Caco-2 (cell line): ENCODE measurements at regions of chr10 and their contacts with region 1.

Region 1: DNA sequence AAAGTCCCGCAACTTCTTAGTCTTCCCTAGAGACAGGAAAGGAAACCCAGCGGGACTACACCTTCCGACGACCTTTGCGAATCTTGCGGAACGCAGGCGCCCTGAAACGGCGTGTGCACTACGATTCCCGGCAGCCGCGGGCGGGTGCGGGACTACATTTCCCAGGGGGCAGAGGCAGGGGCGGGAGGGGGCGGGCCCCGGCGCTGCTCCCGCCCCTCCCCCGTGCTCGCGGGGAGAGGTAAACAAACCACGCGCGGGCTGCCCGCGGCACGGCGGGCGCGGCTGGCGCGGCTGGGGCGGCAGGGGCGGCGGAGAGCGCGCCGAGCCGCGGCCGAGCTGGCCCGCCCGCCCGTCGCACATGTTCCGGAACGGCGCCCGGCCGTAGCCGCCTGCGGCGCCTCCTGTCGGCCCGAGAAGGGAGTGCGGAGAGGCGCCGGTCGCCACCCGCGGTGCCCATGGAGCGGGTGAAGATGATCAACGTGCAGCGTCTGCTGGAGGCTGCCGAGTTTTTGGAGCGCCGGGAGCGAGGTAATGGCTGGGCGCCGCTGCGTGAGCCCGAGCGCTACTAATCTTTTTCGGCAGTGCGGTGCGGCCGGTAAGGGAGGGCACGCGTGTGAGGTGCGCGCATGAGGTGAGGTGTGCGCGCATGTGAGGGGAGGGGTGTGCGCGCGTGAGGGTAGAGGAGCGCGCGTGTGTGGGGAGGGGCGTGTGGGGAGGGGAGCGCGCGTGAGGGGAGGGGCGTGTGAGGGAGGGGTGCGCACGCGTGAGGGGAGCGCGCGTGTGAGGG is 18.5 kb downstream of the MXI1 start:
- DNase-seq: peak; percentile 93 to 95
- H3K4me3 ChIP-seq: peak overlapping the region; percentile 98
- H3K4me3 Mint-ChIP-seq: peak overlapping the region; percentile 86
- H3K27ac Mint-ChIP-seq: peak overlapping the region; percentile 62
- H3K4me1 ChIP-seq: peaks cover 9% of the 10 kb centered on the region
- H3K4me1 Mint-ChIP-seq: peaks cover 28% of the 10 kb centered on the region
- H3K27me3 ChIP-seq: no peaks in the 10 kb centered on the region
- H3K27me3 Mint-ChIP-seq: no peaks in the 10 kb centered on the region
- CTCF ChIP-seq: peak; percentile 60 to 81

Region 2: GRCh38 chr10:110007701-110008517 is 218.0 kb before region 1 on chr10 and contains the start of gene ADD3:
- CTCF ChIA-PET with region 1: no interaction called
- POLR2A ChIA-PET with region 1: no interaction called
- intact Hi-C with region 1: loop called (anchors 2 kb)
- DNase-seq: peak; percentile 96 to 97
- H3K4me3 ChIP-seq: peak within 1 kb of the TSS; percentile 94
- H3K4me3 Mint-ChIP-seq: no peak within 1 kb of the TSS
- H3K27ac Mint-ChIP-seq: no peak within 1 kb of the TSS
- H3K4me1 ChIP-seq: peaks cover 47% of the 10 kb centered on the region
- H3K4me1 Mint-ChIP-seq: peaks cover 11% of the 10 kb centered on the region
- H3K27me3 ChIP-seq: no peaks in the 10 kb centered on the region
- H3K27me3 Mint-ChIP-seq: no peaks in the 10 kb centered on the region
- CTCF ChIP-seq: no peak
- total RNA-seq, gene ADD3: 236 and 264 TPM in 2 replicates

Region 3: DNA sequence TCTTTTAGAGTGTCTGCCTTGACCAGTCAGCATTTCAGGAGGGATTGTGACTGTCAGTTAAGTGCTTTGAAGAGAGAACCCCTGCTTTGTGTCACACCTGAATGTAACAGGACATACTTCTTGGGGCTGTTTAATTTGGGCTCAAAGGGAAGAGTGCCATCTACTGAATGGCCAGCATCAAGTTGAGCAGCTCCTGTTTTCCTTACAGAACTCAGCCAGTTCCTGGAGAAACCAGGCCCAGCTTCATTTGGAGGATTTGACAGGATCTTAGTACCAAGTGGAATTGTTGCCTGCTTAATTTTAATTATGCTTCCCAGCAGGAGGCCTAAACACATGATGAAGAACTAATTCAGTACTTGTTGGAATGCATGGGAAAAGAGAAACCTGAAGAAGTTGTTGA is 209.9 kb before region 1 on chr10:
- CTCF ChIA-PET with region 1: interaction called, 16 read pairs
- POLR2A ChIA-PET with region 1: no interaction called
- intact Hi-C with region 1: no loop called
- DNase-seq: peak in 1 of 2 experiments; percentile 41
- H3K4me3 ChIP-seq: no peak overlapping the region
- H3K4me3 Mint-ChIP-seq: no peak overlapping the region
- H3K27ac Mint-ChIP-seq: no peak overlapping the region
- H3K4me1 ChIP-seq: peaks cover 30% of the 10 kb centered on the region
- H3K4me1 Mint-ChIP-seq: peaks cover 32% of the 10 kb centered on the region
- H3K27me3 ChIP-seq: no peaks in the 10 kb centered on the region
- H3K27me3 Mint-ChIP-seq: no peaks in the 10 kb centered on the region
- CTCF ChIP-seq: peak in 1 of 2 experiments; percentile 51

Region 4: DNA sequence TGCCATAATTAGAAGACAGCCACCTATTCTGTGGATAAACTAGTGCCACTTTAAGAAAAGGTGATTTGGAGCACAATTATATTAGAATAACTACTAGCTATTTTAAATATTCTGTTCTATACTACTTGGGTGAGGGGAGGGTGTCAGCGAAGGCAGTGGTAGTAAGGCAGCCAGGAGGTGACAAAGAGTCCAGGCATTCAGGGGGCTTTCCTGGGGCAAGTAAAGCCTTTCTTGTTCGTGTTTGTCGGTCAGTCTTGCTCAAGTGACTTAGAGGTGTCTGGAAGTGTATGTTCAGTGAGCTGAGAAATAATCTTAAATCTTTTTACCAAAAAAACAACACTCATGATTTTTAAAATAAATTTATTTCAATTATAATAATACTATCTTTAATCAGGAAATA is 183.8 kb before region 1 on chr10:
- CTCF ChIA-PET with region 1: no interaction called
- POLR2A ChIA-PET with region 1: no interaction called
- intact Hi-C with region 1: no loop called
- DNase-seq: no peak
- H3K4me3 ChIP-seq: no peak overlapping the region
- H3K4me3 Mint-ChIP-seq: no peak overlapping the region
- H3K27ac Mint-ChIP-seq: no peak overlapping the region
- H3K4me1 ChIP-seq: peaks cover 17% of the 10 kb centered on the region
- H3K4me1 Mint-ChIP-seq: peaks cover 29% of the 10 kb centered on the region
- H3K27me3 ChIP-seq: no peaks in the 10 kb centered on the region
- H3K27me3 Mint-ChIP-seq: no peaks in the 10 kb centered on the region
- CTCF ChIP-seq: no peak

Region 5: DNA sequence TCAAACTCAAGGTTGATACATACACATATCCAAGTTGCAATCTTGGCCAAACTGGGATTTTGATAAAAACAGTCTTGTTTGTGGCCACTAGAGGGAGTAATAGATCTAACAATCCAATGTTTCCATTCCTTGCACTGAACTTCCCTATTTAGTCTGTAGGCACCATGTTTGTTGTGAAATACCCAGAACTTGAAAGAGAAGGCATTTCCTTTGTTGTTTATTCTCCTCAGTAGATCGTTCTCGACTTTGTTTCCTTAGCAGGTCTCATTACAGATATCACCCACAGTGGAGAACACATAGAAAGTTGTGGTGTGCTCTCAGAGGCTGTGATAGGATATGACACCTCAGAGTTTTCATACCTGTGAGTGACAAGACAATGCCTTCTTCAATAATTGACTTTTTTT is 88.8 kb before region 1 on chr10:
- CTCF ChIA-PET with region 1: interaction called, 14 read pairs
- POLR2A ChIA-PET with region 1: no interaction called
- intact Hi-C with region 1: loop called (anchors 1 kb)
- DNase-seq: peak in 1 of 2 experiments; percentile 64
- H3K4me3 ChIP-seq: no peak overlapping the region
- H3K4me3 Mint-ChIP-seq: no peak overlapping the region
- H3K27ac Mint-ChIP-seq: no peak overlapping the region
- H3K4me1 ChIP-seq: no peaks in the 10 kb centered on the region
- H3K4me1 Mint-ChIP-seq: peaks cover 9% of the 10 kb centered on the region
- H3K27me3 ChIP-seq: no peaks in the 10 kb centered on the region
- H3K27me3 Mint-ChIP-seq: no peaks in the 10 kb centered on the region
- CTCF ChIP-seq: peak; percentile 67 to 72

Region 6: DNA sequence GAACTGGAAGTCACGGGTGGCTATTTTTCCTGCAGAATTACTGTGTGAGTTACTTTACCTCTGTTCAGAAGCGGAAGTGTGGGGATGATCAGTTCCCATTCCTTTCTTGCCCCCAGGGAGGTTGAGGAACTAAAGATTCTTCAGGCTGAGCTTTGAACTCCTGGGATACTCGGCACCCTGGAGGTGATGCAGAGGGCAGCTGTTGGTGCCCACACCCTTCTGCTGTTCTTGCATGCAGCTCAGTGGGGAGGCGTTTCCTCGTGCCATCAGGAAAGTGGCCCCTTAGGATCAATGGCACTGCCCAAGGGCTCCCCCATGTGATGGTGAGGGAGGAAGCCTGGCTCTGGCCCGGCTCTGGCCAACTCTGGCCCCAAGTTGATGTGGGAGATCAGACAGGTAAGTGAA is 63.2 kb before region 1 on chr10:
- CTCF ChIA-PET with region 1: interaction called, 5 read pairs
- POLR2A ChIA-PET with region 1: no interaction called
- intact Hi-C with region 1: loop called (anchors 1 kb)
- DNase-seq: peak in 1 of 2 experiments; percentile 34
- H3K4me3 ChIP-seq: no peak overlapping the region
- H3K4me3 Mint-ChIP-seq: peak overlapping the region; percentile 55
- H3K27ac Mint-ChIP-seq: peak overlapping the region; percentile 79
- H3K4me1 ChIP-seq: peaks cover 39% of the 10 kb centered on the region
- H3K4me1 Mint-ChIP-seq: peaks cover 31% of the 10 kb centered on the region
- H3K27me3 ChIP-seq: no peaks in the 10 kb centered on the region
- H3K27me3 Mint-ChIP-seq: no peaks in the 10 kb centered on the region
- CTCF ChIP-seq: no peak

Region 7: DNA sequence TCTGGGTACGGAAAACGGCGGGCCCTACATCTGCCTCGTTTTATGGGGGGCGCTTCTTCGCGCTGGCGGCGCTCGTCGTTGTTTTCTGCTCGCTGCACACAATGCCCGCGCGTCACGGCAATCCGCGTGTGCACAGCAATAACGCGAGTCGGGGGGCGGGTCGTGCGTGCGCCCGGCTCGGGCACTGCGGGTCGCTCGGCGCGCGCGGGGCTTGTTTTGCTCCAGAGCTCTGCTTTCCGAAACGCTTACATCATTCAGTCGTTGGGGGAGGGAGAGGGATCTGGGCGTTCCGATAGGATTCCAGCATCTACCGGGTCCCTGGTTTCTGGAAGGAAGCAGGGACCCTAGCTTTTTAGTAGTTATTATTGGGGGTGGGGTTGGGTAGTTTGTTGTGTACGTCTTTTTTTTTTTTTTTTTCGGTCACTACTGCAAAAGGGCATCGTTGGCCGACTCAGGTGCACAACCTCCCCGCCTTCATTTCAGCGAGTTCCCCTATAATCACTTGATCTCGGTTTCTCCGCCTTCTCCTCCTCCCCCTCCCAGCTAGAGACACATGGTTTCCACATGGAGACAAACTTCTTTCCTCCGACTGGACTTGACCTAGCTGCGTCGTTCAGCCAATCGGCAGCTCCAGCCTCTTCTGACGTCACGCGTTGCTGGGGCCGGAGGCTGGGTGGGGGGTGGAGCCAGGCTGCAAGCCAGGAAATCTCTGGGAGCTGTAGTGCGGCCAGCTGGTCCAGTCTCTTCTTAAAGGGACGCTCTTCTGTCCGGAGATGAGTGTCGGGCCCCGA is 15.1 kb before region 1 on chr10:
- CTCF ChIA-PET with region 1: interaction called, 12 read pairs
- POLR2A ChIA-PET with region 1: interaction called, 3 read pairs
- intact Hi-C with region 1: loop called (anchors 1 kb)
- DNase-seq: peak; percentile 96 to 97
- H3K4me3 ChIP-seq: peak overlapping the region; percentile 79
- H3K4me3 Mint-ChIP-seq: peak overlapping the region; percentile 81
- H3K27ac Mint-ChIP-seq: peak overlapping the region; percentile 74
- H3K4me1 ChIP-seq: peaks cover 6% of the 10 kb centered on the region; the same call in 1 of the 2 replicates
- H3K4me1 Mint-ChIP-seq: peaks cover 28% of the 10 kb centered on the region
- H3K27me3 ChIP-seq: no peaks in the 10 kb centered on the region
- H3K27me3 Mint-ChIP-seq: no peaks in the 10 kb centered on the region
- CTCF ChIP-seq: no peak

Region 8: DNA sequence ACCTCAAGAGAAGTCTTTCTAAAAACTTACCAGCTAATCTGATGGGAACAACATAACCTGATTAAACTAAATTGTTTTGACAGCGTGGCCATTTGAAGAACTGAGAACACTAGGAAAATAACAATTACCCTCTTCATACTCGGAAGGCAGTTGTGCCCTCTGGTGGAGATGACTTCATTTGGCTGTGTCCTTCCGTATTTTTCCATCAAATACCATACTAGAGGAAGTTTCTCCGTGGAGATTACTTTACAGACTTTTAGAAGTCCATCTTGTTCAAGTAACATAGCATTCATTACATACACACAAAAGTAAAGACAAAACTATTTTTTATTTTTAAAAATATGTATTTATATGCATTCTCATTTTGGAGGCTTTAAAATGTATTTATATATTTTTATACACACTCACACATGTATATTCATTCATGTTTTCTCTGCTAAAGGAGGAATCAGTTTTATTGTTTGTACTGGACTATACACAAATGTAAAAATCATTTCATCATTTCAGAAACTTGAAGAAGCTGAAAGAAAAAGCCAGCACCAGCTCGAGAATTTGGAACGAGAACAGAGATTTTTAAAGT is 53.5 kb after region 1 on chr10:
- CTCF ChIA-PET with region 1: interaction called, 3 read pairs
- POLR2A ChIA-PET with region 1: no interaction called
- intact Hi-C with region 1: loop called (anchors 1 kb)
- DNase-seq: peak; percentile 53 to 62
- H3K4me3 ChIP-seq: no peak overlapping the region
- H3K4me3 Mint-ChIP-seq: peak overlapping the region; percentile 19
- H3K27ac Mint-ChIP-seq: no peak overlapping the region
- H3K4me1 ChIP-seq: no peaks in the 10 kb centered on the region
- H3K4me1 Mint-ChIP-seq: no peaks in the 10 kb centered on the region
- H3K27me3 ChIP-seq: no peaks in the 10 kb centered on the region
- H3K27me3 Mint-ChIP-seq: no peaks in the 10 kb centered on the region
- CTCF ChIP-seq: peak; percentile 65 to 83

Region 9: GRCh38 chr10:110584006-110584405 is 358.1 kb after region 1 on chr10:
- CTCF ChIA-PET with region 1: no interaction called
- POLR2A ChIA-PET with region 1: no interaction called
- intact Hi-C with region 1: no loop called
- DNase-seq: no peak
- H3K4me3 ChIP-seq: no peak overlapping the region
- H3K4me3 Mint-ChIP-seq: no peak overlapping the region
- H3K27ac Mint-ChIP-seq: no peak overlapping the region
- H3K4me1 ChIP-seq: no peaks in the 10 kb centered on the region
- H3K4me1 Mint-ChIP-seq: peaks cover 6% of the 10 kb centered on the region
- H3K27me3 ChIP-seq: no peaks in the 10 kb centered on the region
- H3K27me3 Mint-ChIP-seq: no peaks in the 10 kb centered on the region
- CTCF ChIP-seq: no peak